ENCODE measurements at regions of chr5 and their contacts with region 1.

Region 1: DNA sequence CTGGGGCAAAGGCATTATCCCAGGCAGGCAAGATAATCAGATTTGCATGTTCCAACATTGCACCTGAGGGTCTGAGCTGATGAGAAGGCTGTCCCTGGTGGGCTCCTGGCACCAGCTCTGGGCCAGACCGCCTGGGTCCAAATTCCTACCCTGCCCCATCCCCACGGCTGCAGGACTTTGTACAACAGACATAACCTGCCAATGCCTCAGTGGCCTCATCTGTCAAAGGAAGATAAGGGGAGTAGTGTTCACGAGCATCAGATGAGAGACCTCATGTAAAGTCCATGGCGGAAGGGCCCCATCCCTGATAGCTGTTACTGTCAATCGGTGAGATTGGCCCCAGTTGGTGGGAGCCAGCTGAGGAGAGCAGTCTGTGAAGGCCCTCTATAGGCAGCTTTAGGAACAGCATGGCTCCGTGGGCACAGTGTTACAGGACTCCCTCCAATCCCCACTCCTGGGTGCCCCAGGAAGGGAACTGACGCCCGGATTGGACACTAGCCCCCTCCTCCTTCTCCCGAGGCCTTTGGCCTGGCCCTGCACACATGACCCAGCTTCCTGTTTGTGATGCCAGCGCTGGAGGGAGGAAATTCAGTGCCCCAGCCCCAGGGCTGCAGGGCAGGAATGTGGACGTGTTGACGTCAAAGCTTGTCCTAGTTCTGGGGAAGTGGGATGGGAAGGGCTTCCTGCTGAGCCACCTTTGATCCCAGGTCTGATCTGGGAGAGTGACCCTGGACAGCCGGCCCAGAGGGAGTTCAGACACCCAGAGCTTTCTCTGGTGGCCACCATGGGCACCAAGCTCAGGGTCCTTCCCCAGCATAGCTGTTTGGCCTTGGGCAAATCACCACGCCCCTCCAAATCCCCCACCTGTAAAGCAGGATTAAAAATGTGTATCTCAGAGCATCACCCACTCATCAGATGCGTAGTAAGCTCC is 56.2 kb downstream of the DUSP1 start:
- DNase-seq: peak; percentile 88 to 97 (median 93)
- H3K4me3 ChIP-seq: no peak overlapping the region
- H3K4me3 Mint-ChIP-seq: peak overlapping the region; percentile 20 to 51
- H3K27ac ChIP-seq: peak overlapping the region; percentile 3 to 34
- H3K27ac Mint-ChIP-seq: peak overlapping the region; percentile 21 to 83 (median 69)
- H3K4me1 ChIP-seq: peaks cover 12 to 18% of the 10 kb centered on the region in 2 donors
- H3K4me1 Mint-ChIP-seq: peaks cover 19% of the 10 kb centered on the region
- H3K27me3 ChIP-seq: peaks cover 0 to 4% of the 10 kb centered on the region in 2 donors
- H3K27me3 Mint-ChIP-seq: peaks cover 8 to 15% (median 14%) of the 10 kb centered on the region in 3 donors
- CTCF ChIP-seq: peak; percentile 95

Region 2: DNA sequence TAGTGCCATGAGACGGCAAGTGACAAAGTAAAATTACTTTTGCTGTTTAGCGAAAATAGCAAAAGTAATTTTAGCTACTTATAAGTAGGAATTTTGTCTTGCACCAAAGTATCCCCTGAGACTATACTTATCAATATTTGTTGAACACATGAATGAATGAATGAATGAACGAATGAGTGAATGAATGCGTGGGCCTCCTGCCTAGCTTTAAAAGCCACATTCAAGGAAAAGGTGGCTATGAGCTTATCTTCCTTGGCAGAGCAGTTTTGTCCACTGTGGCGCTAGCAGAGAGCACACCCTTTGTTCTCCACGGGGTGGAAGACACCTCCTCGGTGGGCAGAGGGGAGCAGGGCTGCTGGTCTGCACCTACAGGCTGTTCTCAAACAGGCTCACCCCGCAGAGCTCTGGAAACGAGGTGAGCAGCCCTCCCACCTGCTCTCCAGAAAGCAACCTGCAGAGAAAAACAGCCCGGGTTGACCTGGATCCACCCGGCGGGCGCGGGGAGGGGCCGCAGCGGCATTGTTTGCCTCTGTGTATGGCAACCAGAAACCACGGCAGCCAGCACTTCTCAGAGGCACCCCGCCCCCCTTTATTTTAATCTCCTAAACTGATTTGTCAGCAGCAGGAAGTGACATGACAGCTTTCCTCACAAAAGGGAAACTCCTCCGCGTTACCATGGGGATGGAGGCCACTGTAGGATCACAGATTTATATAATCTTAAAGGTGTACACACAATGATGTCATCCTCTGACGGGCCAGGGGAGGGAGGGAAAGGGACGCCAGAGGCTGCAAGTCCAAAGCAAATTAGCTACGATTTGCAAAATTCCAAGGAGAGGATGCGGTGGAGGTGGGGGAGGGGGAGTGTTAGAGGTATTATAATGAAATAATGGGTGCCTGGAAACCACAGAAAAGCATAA is 50.4 kb after region 1 on chr5:
- intact Hi-C with region 1: loop called in 1 of 2 experiments (anchors 2 kb)
- DNase-seq: peak; percentile 100
- H3K4me3 ChIP-seq: peak overlapping the region; percentile 34 to 95 (median 42)
- H3K4me3 Mint-ChIP-seq: peak overlapping the region; percentile 94 to 100
- H3K27ac ChIP-seq: peak overlapping the region; percentile 89 to 100
- H3K27ac Mint-ChIP-seq: peak overlapping the region; percentile 94 to 99 (median 98)
- H3K4me1 ChIP-seq: peaks cover 38 to 44% of the 10 kb centered on the region in 2 donors
- H3K4me1 Mint-ChIP-seq: peaks cover 41% of the 10 kb centered on the region
- H3K27me3 ChIP-seq: no peaks in the 10 kb centered on the region
- H3K27me3 Mint-ChIP-seq: peaks cover 3 to 28% (median 14%) of the 10 kb centered on the region in 3 donors
- CTCF ChIP-seq: no peak

Region 3: GRCh38 chr5:172833686-172834414 is 119.1 kb after region 1 on chr5 and contains the start of gene ERGIC1:
- intact Hi-C with region 1: loop called in 1 of 2 experiments (anchors 10 kb)
- DNase-seq: peak; percentile 70 to 78 (median 77)
- H3K4me3 ChIP-seq: peak within 1 kb of the TSS; percentile 69 to 84 (median 75)
- H3K4me3 Mint-ChIP-seq: peak within 1 kb of the TSS; percentile 85 to 91
- H3K27ac ChIP-seq: peak within 1 kb of the TSS; percentile 53 to 91
- H3K27ac Mint-ChIP-seq: peak within 1 kb of the TSS; percentile 86 to 96 (median 94)
- H3K4me1 ChIP-seq: peaks cover 51 to 74% of the 10 kb centered on the region in 2 donors
- H3K4me1 Mint-ChIP-seq: peaks cover 62% of the 10 kb centered on the region
- H3K27me3 ChIP-seq: no peaks in the 10 kb centered on the region
- H3K27me3 Mint-ChIP-seq: peaks cover 0 to 2% (median 1%) of the 10 kb centered on the region in 3 donors
- CTCF ChIP-seq: no peak
- polyA plus RNA-seq, gene ERGIC1: 28.3 to 76.2 (median 34.1) TPM

Region 4: DNA sequence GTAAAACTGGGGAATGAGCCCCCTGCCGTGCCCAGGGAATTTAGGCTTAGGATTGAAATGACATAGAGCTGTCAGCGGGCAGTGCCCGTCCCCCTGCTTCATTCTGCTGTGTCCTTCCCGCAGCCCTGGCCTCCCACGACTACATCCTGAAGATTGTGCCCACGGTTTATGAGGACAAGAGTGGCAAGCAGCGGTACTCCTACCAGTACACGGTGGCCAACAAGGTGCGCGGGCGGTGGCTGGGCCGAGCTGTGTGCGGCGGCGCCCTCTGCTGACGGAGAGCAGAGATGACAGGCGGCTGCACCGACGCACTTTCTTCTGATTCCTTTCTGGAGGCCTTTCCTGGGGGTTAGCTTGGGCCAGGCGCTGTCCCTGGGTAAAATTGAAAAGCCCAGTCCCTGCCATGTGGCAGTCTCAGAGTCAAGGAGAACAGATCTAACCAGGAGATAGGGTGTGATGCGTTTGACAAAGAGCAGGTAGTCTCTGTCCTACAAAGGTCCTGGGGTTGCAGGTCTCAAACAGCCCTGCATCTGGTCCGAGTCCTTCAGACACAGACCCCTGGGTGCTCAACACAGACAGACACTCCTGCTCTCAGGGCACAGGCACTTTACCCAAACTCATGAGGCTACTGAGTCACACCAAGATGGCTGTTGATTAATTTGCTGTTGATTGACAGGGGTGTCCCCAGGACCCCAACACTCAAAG is 217.7 kb after region 1 on chr5:
- intact Hi-C with region 1: loop called (anchors 1 to 2 kb)
- DNase-seq: peak; percentile 61 to 73 (median 66)
- H3K4me3 ChIP-seq: no peak overlapping the region
- H3K4me3 Mint-ChIP-seq: no peak overlapping the region
- H3K27ac ChIP-seq: no peak overlapping the region
- H3K27ac Mint-ChIP-seq: peak overlapping the region in 4 of 7 donors; percentile 15 to 82 (median 54)
- H3K4me1 ChIP-seq: no peaks in the 10 kb centered on the region
- H3K4me1 Mint-ChIP-seq: peaks cover 13% of the 10 kb centered on the region
- H3K27me3 ChIP-seq: no peaks in the 10 kb centered on the region
- H3K27me3 Mint-ChIP-seq: peaks cover 0 to 2% (median 1%) of the 10 kb centered on the region in 3 donors
- CTCF ChIP-seq: peak; percentile 97

Region 5: GRCh38 chr5:172985596-172985995 is 270.8 kb after region 1 on chr5:
- intact Hi-C with region 1: no loop called
- DNase-seq: no peak
- H3K4me3 ChIP-seq: peak overlapping the region in 1 of 3 experiments; percentile 95
- H3K4me3 Mint-ChIP-seq: peak overlapping the region in 1 of 2 donors; percentile 51
- H3K27ac ChIP-seq: peak overlapping the region in 1 of 2 donors; percentile 68
- H3K27ac Mint-ChIP-seq: peak overlapping the region in 2 of 7 donors; percentile 97 to 98
- H3K4me1 ChIP-seq: peaks cover 31 to 37% of the 10 kb centered on the region in 2 donors
- H3K4me1 Mint-ChIP-seq: peaks cover 39% of the 10 kb centered on the region
- H3K27me3 ChIP-seq: no peaks in the 10 kb centered on the region
- H3K27me3 Mint-ChIP-seq: no peaks in the 10 kb centered on the region
- CTCF ChIP-seq: no peak

Region 6: GRCh38 chr5:173139641-173140040 is 424.9 kb after region 1 on chr5:
- intact Hi-C with region 1: no loop called
- DNase-seq: no peak
- H3K4me3 ChIP-seq: no peak overlapping the region
- H3K4me3 Mint-ChIP-seq: no peak overlapping the region
- H3K27ac ChIP-seq: no peak overlapping the region
- H3K27ac Mint-ChIP-seq: no peak overlapping the region
- H3K4me1 ChIP-seq: peaks cover 0 to 1% of the 10 kb centered on the region in 2 donors
- H3K4me1 Mint-ChIP-seq: no peaks in the 10 kb centered on the region
- H3K27me3 ChIP-seq: no peaks in the 10 kb centered on the region
- H3K27me3 Mint-ChIP-seq: peaks cover 0 to 4% (median 0%) of the 10 kb centered on the region in 3 donors
- CTCF ChIP-seq: no peak

Measured in CD14-positive monocyte (primary cell).